Endothelial cell of umbilical vein (primary cell): ENCODE measurements at regions of chr15 and their contacts with region 1.

Region 1: GRCh38 chr15:78308422-78309032 is 9.1 kb upstream of the SKIC8 start:
- DNase-seq: peak; percentile 73
- H3K4me3 ChIP-seq: no peak overlapping the region
- H3K27ac ChIP-seq: no peak overlapping the region
- H3K4me1 ChIP-seq: peaks cover 3% of the 10 kb centered on the region
- H3K27me3 ChIP-seq: no peaks in the 10 kb centered on the region
- CTCF ChIP-seq: peak; percentile 97
- POLR2A ChIP-seq: no peak

Region 2: GRCh38 chr15:78415286-78415685 is 106.8 kb after region 1 on chr15:
- CTCF ChIA-PET with region 1: interaction called, 367 read pairs
- POLR2A ChIA-PET with region 1: no interaction called
- dilution Hi-C with region 1: no loop called
- intact Hi-C with region 1: loop called (anchors 1 kb)
- DNase-seq: peak; percentile 14
- H3K4me3 ChIP-seq: no peak overlapping the region
- H3K27ac ChIP-seq: no peak overlapping the region
- H3K4me1 ChIP-seq: peaks cover 12% of the 10 kb centered on the region
- H3K27me3 ChIP-seq: peaks cover 3 to 9% of the 10 kb centered on the region in 2 experiments
- CTCF ChIP-seq: no peak
- POLR2A ChIP-seq: no peak

Region 3: GRCh38 chr15:78429477-78429876 is 121.0 kb after region 1 on chr15:
- CTCF ChIA-PET with region 1: interaction called, 367 read pairs
- POLR2A ChIA-PET with region 1: interaction called, 3 read pairs
- dilution Hi-C with region 1: no loop called
- intact Hi-C with region 1: no loop called
- DNase-seq: no peak
- H3K4me3 ChIP-seq: no peak overlapping the region
- H3K27ac ChIP-seq: no peak overlapping the region
- H3K4me1 ChIP-seq: no peaks in the 10 kb centered on the region
- H3K27me3 ChIP-seq: peaks cover 22 to 35% of the 10 kb centered on the region in 2 experiments
- CTCF ChIP-seq: no peak
- POLR2A ChIP-seq: no peak

Region 4: GRCh38 chr15:78481917-78482316 is 173.4 kb after region 1 on chr15:
- CTCF ChIA-PET with region 1: interaction called, 3 read pairs
- POLR2A ChIA-PET with region 1: no interaction called
- dilution Hi-C with region 1: no loop called
- intact Hi-C with region 1: loop called (anchors 1 kb)
- DNase-seq: no peak
- H3K4me3 ChIP-seq: no peak overlapping the region
- H3K27ac ChIP-seq: no peak overlapping the region
- H3K4me1 ChIP-seq: no peaks in the 10 kb centered on the region
- H3K27me3 ChIP-seq: no peaks in the 10 kb centered on the region
- CTCF ChIP-seq: no peak
- POLR2A ChIP-seq: no peak

Region 5: DNA sequence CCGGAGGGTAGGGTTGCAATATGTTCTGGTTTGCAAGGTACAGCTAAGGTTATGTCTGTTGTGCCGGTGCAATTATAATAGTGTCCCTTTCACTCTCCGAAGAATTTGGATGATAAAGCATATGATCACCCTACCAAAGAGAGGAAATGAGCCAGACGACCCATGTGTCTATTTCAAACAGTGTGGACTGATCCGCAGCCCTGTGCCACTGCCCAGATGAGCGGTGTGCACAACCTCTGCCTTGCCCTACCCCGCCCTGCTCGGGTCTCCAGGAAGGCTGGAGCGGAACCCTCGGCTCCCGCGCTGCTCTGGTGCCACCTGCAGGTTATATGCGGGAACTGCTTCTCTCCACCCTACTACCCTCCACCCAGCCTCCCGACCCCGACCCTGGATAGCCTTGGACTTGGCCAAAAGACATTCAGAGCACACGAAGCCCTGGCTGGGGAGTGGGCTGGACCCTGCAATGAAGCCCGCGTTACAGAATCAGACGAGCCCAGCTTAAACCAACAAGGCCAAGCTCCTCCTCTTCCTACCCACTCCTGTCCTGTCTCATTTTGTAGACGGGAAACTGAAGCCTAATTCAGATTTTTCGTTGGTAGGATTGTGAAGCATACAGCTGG is 400.8 kb after region 1 on chr15:
- CTCF ChIA-PET with region 1: interaction called, 7 read pairs
- POLR2A ChIA-PET with region 1: no interaction called
- dilution Hi-C with region 1: no loop called
- intact Hi-C with region 1: loop called (anchors 1 kb)
- DNase-seq: peak; percentile 42
- H3K4me3 ChIP-seq: no peak overlapping the region
- H3K27ac ChIP-seq: no peak overlapping the region
- H3K4me1 ChIP-seq: no peaks in the 10 kb centered on the region
- H3K27me3 ChIP-seq: peaks cover 12 to 23% of the 10 kb centered on the region in 2 experiments
- CTCF ChIP-seq: peak; percentile 68 to 90
- POLR2A ChIP-seq: no peak